HEK293 (cell line): ENCODE measurements at regions of chr17 and their contacts with region 1.

Region 1: GRCh38 chr17:44533533-44534246 is 23.6 kb upstream of the FZD2 start:
- H3K4me3 ChIP-seq: no peak overlapping the region
- H3K27ac ChIP-seq: peak overlapping the region; percentile 58
- H3K4me1 ChIP-seq: no peaks in the 10 kb centered on the region; the same call in 1 of the 2 replicates
- CTCF ChIP-seq: peak; percentile 97

Region 2: GRCh38 chr17:44279666-44280391 is 253.9 kb before region 1 on chr17:
- CTCF ChIA-PET with region 1: no interaction called
- POLR2A ChIA-PET with region 1: no interaction called
- H3K4me3 ChIP-seq: no peak overlapping the region
- H3K27ac ChIP-seq: no peak overlapping the region
- H3K4me1 ChIP-seq: no peaks in the 10 kb centered on the region
- CTCF ChIP-seq: no peak

Region 3: GRCh38 chr17:44464037-44464436 is 69.7 kb before region 1 on chr17:
- CTCF ChIA-PET with region 1: no interaction called
- POLR2A ChIA-PET with region 1: no interaction called
- H3K4me3 ChIP-seq: no peak overlapping the region
- H3K27ac ChIP-seq: no peak overlapping the region
- H3K4me1 ChIP-seq: peaks cover 24% of the 10 kb centered on the region
- CTCF ChIP-seq: no peak

Region 4: DNA sequence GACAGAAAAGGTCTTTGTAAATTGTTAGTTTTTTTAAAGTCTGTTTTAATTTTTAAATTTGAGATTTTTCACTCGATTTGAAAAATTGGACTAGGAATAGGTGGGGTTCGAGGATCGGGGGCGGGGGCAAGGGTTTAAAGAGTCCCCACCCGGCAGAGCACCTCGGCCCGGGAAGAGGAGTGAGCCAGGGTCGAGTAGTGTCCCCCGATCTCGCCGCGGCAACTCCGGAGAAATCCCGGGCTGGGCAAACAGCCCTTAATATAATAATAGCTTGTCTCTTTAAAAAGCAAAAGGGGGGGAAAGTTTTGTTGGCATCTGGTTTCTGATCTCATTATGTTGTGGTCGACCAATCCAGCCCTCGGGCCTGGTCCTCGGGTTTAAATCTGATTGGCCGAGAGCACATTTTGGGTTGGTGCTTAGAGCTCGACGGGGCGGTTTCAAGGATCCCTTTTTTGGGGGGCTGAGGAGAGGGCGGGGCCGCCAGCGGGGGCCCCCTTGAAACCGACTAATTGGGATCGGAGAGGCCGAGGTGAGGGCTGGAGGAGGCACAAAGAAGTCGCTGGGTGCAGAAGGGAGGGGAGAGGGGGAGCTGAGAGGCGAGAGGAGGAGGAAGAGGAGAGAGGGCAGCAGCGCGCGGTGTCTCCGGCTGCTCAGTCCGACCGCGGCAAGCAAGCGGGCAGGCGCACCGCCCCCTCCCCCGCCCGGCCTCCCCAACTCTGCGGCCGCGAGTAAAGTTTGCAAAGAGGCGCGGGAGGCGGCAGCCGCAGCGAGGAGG is 23.3 kb after region 1 on chr17 and contains the start of gene FZD2:
- CTCF ChIA-PET with region 1: interaction called, 15 read pairs
- POLR2A ChIA-PET with region 1: interaction called, 12 read pairs
- H3K4me3 ChIP-seq: peak within 1 kb of the TSS; percentile 68
- H3K27ac ChIP-seq: peak within 1 kb of the TSS; percentile 87
- H3K4me1 ChIP-seq: peaks cover 13% of the 10 kb centered on the region
- CTCF ChIP-seq: no peak

Region 5: DNA sequence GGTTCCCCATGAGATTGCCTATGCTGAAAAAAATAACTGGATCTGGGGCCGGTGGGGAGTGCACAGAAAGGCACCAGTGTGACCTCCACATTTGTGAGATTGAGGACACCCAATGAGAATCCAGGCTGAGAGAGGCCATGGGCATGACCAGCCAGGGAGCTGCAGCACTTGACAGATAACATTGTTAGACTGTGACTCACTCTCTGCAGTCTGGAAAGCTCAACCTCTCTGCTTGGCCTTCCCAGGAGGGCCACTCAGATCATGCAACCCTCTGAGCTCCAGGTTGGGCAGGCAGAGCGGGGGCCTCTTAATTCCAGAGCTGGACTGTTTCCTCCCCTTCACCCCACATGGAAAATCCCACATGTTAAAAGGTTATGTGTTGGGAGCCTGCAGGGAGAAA is 53.6 kb after region 1 on chr17:
- CTCF ChIA-PET with region 1: interaction called, 17 read pairs
- POLR2A ChIA-PET with region 1: interaction called, 3 read pairs
- H3K4me3 ChIP-seq: no peak overlapping the region
- H3K27ac ChIP-seq: peak overlapping the region; percentile 28; the same call in 1 of the 2 replicates
- H3K4me1 ChIP-seq: peaks cover 6% of the 10 kb centered on the region
- CTCF ChIP-seq: no peak

Region 6: DNA sequence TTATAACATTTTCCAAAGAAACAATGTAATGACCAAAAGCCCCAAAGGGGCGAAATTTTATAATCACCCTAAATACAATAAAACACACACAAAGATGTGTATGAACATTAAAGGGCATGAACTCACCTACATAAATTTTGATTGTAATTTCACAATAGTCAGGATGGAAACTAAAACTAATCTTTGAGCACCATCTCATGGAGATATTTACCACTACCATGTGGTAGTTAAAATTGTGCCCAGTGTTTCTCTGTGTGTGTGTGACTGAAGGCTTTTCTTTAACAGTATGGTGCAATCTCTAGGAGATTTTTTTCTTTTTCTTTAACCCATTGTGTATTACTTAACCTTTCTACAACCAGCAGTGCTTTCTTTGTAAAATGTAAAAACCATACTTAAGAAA is 102.9 kb after region 1 on chr17:
- CTCF ChIA-PET with region 1: interaction called, 100 read pairs
- POLR2A ChIA-PET with region 1: no interaction called
- H3K4me3 ChIP-seq: no peak overlapping the region
- H3K27ac ChIP-seq: no peak overlapping the region
- H3K4me1 ChIP-seq: no peaks in the 10 kb centered on the region
- CTCF ChIP-seq: peak; percentile 63; the same call in 1 of the 2 replicates

Region 7: GRCh38 chr17:44663095-44663494 is 129.4 kb after region 1 on chr17:
- CTCF ChIA-PET with region 1: interaction called, 11 read pairs
- POLR2A ChIA-PET with region 1: no interaction called
- H3K4me3 ChIP-seq: no peak overlapping the region
- H3K27ac ChIP-seq: no peak overlapping the region
- H3K4me1 ChIP-seq: no peaks in the 10 kb centered on the region
- CTCF ChIP-seq: no peak

Region 8: GRCh38 chr17:44738214-44738906 is 204.7 kb after region 1 on chr17:
- CTCF ChIA-PET with region 1: interaction called, 11 read pairs
- POLR2A ChIA-PET with region 1: no interaction called
- H3K4me3 ChIP-seq: no peak overlapping the region
- H3K27ac ChIP-seq: no peak overlapping the region
- H3K4me1 ChIP-seq: no peaks in the 10 kb centered on the region
- CTCF ChIP-seq: no peak

Region 9: DNA sequence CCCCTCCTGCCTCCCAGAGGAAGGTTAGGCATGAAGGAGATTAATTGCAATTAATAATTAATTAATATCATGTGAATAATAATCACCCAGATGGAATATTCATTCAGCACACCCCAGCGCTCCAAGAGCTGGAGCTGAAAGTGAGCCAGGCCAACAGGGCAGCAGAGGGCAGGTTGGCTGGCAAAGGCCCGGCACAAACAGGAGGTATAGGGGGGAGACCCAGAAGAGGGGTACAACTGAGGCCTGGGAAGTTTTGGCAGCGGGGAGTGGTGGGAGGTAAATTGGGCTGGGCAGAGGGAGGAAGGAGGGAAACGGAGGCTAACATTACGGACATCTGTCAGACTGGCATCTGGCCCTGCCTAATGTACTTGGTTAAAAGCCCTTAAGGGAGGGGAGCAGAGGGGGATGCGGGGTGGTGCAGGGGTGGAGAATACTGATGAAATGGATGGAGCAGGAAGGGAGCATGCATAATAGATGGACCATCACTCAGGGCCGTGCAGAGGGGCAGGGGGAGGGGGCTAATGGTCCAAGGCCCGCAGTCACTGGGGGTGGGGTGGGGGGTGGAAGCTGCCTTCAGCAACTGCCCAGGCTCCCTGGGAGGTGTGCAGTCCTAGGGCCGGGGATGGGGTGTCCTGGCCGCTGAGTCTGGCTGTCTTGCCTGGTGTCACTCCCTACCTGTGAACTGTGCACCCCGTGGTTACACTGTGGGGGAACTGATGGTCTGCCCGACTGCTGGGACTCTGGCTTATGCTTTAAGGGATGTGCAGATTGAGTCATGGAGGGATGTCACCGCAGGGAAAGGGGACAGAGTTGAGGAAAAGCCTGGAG is 227.0 kb after region 1 on chr17:
- CTCF ChIA-PET with region 1: no interaction called
- POLR2A ChIA-PET with region 1: no interaction called
- H3K4me3 ChIP-seq: no peak overlapping the region
- H3K27ac ChIP-seq: no peak overlapping the region
- H3K4me1 ChIP-seq: peaks cover 3% of the 10 kb centered on the region
- CTCF ChIP-seq: no peak